ENCODE measurements at regions of chr3 and their contacts with region 1.

Region 1: DNA sequence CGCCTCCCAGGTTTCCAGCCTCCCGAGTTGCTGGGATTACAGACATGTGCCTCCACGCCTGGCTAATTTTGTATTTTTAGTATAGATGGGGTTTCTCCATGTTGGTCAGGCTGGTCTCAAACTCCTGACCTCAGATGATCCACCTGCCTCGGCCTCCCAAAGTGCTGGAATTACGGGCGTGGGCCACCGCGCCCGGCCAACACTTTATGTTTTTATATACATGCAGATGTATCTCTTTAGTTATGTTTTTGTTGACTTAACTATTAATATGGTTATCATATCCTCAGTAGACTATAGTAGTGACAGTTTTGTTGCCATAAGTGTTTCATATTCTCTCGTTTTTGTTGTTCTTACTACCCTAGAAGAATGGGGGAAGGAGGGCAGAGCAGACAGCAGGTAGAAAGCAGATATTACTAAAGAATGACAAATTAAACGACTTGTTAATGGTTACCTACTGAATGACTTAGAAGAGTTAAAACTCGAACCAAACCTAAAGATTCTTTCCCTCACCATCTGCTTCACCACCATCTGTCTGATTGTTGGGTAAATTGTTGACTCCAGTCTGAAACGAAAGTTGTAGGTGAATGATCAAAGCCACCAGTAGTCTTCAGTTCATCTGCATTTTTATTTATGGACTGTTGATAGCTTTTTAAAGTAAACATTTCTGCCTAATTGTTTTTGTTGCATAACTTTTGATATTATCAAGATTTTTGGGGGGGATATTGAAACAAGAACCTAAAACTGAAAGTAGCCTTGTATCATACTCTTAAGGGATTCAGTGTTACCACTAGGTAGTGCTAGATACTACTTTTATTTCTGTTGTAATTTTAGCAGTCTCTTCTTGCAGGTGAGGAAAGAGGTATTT is 89.3 kb downstream of the RASA2 start:
- DNase-seq: no peak
- H3K4me3 Mint-ChIP-seq: peak overlapping the region; percentile 25
- H3K27ac Mint-ChIP-seq: peak overlapping the region; percentile 61
- H3K4me1 Mint-ChIP-seq: peaks cover 10% of the 10 kb centered on the region
- H3K27me3 Mint-ChIP-seq: no peaks in the 10 kb centered on the region

Region 2: GRCh38 chr3:141644931-141645330 is 68.8 kb after region 1 on chr3:
- intact Hi-C with region 1: loop called (anchors 2 kb)
- DNase-seq: peak; percentile 51
- H3K4me3 Mint-ChIP-seq: no peak overlapping the region
- H3K27ac Mint-ChIP-seq: no peak overlapping the region
- H3K4me1 Mint-ChIP-seq: no peaks in the 10 kb centered on the region
- H3K27me3 Mint-ChIP-seq: peaks cover 1% of the 10 kb centered on the region

Region 3: DNA sequence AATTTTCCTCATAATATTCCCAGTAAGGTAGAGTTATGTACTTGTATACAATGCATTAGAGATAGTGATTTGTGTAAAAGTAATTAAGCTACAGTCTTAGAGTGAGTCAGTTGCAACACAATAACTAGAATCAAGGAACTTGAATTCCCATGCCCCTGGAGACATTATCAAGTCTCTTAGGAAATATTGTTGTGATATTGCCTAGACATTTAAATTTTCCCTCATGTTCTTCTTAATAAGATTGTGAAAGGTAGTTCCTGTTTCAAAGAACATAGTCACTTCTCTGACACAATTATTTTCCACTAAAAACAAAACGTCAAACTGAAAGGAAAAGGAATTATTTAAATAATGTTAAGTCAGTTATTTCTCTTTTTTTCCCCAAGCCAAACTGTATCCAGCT is 287.4 kb after region 1 on chr3:
- intact Hi-C with region 1: no loop called
- DNase-seq: no peak
- H3K4me3 Mint-ChIP-seq: no peak overlapping the region
- H3K27ac Mint-ChIP-seq: no peak overlapping the region
- H3K4me1 Mint-ChIP-seq: peaks cover 6% of the 10 kb centered on the region
- H3K27me3 Mint-ChIP-seq: no peaks in the 10 kb centered on the region

Region 4: DNA sequence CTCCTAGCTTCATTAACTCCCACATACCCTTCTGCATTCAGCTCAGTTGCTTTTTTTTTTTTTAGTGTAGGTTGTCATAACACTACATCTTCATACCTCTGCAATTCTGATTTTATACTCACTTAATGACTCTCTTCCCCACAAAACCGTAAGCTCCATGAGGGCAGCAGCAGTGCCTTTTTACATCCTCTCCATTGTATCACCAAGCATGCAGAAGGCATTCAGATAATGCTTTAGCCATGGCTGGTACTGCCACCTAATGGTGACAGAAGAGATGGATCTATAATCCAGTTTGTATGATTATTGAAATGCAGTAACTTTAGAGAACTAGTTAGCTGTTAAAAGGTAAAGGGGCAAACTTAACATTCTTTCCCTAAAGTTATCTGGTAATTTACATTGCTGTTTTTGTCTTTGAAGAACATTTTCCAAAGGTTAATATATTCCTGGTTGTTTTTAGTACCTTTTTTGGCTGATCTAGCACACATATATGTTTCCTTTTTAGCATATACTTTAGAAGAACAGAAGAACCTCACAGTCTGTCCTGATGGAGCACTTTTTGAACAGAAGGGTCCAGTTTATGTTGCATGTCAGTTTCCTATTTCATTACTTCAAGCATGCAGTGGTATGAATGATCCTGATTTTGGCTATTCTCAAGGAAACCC is 337.2 kb after region 1 on chr3:
- intact Hi-C with region 1: loop called (anchors 5 kb)
- DNase-seq: peak; percentile 26
- H3K4me3 Mint-ChIP-seq: no peak overlapping the region
- H3K27ac Mint-ChIP-seq: no peak overlapping the region
- H3K4me1 Mint-ChIP-seq: peaks cover 4% of the 10 kb centered on the region
- H3K27me3 Mint-ChIP-seq: no peaks in the 10 kb centered on the region

Region 5: DNA sequence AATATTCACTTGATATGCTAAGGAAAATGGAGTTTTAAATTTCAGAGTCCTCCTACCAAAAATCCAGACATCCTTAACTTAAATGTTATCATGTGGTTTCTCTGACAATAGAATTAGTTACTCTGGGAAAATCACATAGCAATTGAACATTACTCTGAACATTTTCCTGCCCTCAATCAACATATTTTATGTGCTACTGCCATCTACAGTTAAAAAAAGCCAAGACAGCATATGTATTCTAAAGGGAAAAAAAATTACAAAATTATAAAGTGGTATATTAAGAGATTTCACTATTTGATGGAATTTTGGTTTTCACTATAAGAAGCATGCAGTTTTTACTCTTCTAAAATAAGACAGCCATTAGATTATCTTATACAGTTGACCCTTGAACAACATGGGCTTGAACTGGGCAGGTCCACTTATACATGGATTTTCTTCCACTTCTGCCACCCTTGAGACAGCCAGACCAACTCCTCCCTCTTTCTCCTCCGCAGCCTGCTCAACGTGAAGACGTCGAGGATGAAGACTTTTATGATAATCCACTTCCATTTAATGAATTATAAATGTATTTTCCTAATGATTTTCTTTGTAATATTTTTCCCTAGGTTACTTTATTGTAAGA is 422.7 kb after region 1 on chr3:
- intact Hi-C with region 1: loop called (anchors 1 kb)
- DNase-seq: no peak
- H3K4me3 Mint-ChIP-seq: no peak overlapping the region
- H3K27ac Mint-ChIP-seq: no peak overlapping the region
- H3K4me1 Mint-ChIP-seq: no peaks in the 10 kb centered on the region
- H3K27me3 Mint-ChIP-seq: no peaks in the 10 kb centered on the region